ENCODE measurements at regions of chr14 and their contacts with region 1.

Region 1: DNA sequence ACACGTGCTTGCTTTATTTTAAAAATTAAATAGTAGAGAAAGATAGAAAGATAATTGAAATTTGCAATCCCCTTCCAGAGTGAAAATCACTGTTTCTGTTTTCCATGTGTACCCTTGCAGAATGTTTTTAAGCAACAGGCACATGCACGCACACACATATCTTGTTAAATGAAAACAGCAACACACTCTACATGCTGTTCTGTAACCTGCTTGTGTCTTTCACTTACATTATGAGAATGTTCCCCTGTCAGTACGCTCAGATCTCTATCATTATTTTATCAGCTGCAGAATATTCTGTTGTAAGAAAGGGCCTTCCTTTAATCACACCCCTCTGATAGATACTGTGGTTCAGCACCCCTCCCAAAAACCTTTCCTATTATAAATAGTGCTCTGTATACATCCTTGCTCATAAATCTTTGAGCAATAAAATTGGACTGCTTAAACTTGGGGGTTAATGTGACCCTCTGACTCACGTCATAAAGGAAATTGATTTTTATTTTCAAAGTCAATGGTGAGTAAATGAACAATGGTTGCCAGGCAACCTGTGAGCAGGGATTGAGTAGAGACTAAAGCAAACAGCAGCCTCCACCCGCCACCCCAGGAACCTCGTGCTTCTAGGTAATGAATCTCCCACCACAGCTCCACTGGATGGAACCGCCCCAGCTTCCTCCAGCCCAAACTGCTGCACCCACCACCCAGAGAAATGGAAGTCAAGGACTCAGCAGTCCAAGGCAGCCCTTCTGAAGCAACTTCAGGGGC is 31.9 kb upstream of the CHGA start:
- DNase-seq: peak; percentile 29
- H3K4me3 ChIP-seq: no peak overlapping the region
- H3K27ac ChIP-seq: no peak overlapping the region
- H3K4me1 ChIP-seq: no peaks in the 10 kb centered on the region
- H3K27me3 ChIP-seq: no peaks in the 10 kb centered on the region
- CTCF ChIP-seq: no peak

Region 2: DNA sequence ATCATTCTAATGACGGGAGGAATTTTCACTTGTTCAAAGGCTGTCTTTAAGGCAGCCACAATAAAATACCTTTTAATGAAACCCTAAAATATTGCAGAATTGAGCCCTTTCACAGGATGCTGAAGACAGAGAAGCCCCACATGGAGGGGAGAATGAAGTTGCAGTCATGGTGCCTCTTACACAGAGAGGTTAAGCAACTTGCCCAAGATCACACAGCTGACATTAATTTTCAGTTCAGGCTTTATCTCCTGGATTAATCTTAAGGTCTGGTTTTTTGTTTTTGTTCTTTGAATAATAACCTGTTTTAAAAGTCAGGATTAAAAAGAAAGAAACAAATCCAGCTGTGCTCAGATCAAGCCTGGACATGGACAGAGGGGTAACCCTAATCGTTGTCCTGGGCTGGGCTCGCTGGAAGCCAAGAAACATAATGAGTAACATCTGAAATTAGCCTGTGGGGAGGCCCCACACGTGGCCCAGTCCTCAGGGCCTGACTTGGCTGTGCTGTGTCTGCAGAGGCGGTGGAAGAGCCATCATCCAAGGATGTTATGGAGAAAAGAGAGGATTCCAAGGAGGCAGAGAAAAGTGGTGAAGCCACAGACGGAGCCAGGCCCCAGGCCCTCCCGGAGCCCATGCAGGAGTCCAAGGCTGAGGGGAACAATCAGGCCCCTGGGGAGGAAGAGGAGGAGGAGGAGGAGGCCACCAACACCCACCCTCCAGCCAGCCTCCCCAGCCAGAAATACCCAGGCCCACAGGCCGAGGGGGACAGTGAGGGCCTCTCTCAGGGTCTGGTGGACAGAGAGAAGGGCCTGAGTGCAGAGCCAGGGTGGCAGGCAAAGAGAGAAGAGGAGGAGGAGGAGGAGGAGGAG is 40.0 kb after region 1 on chr14:
- CTCF ChIA-PET with region 1: no interaction called
- dilution Hi-C with region 1: loop called (anchors 5 kb)
- in situ Hi-C with region 1: no loop called
- intact Hi-C with region 1: no loop called
- DNase-seq: peak; percentile 75
- H3K4me3 ChIP-seq: no peak overlapping the region
- H3K27ac ChIP-seq: no peak overlapping the region
- H3K4me1 ChIP-seq: peaks cover 33% of the 10 kb centered on the region
- H3K27me3 ChIP-seq: no peaks in the 10 kb centered on the region
- CTCF ChIP-seq: no peak

Region 3: GRCh38 chr14:92951912-92952471 is 61.0 kb after region 1 on chr14:
- CTCF ChIA-PET with region 1: no interaction called
- dilution Hi-C with region 1: no loop called
- in situ Hi-C with region 1: no loop called
- intact Hi-C with region 1: no loop called
- DNase-seq: peak; percentile 40
- H3K4me3 ChIP-seq: no peak overlapping the region
- H3K27ac ChIP-seq: no peak overlapping the region
- H3K4me1 ChIP-seq: no peaks in the 10 kb centered on the region
- H3K27me3 ChIP-seq: no peaks in the 10 kb centered on the region
- CTCF ChIP-seq: peak; percentile 85 to 92

Measured in mammary epithelial cell (primary cell).